ENCODE measurements at regions of chr7 and their contacts with region 1.

Region 1: GRCh38 chr7:120554960-120555571 is 282.1 kb downstream of the KCND2 start:
- DNase-seq: peak; percentile 71
- ATAC-seq: peak; percentile 95
- H3K4me3 ChIP-seq: no peak overlapping the region
- H3K27ac ChIP-seq: no peak overlapping the region
- H3K4me1 ChIP-seq: no peaks in the 10 kb centered on the region
- H3K27me3 ChIP-seq: no peaks in the 10 kb centered on the region
- CTCF ChIP-seq: peak; percentile 87

Region 2: GRCh38 chr7:118918556-118918955 is 1636.5 kb before region 1 on chr7:
- CTCF ChIA-PET with region 1: no interaction called
- POLR2A ChIA-PET with region 1: no interaction called
- intact Hi-C with region 1: loop called (anchors 2 kb)
- DNase-seq: peak; percentile 42
- ATAC-seq: peak; percentile 48; the same call in 1 of the 2 replicates
- H3K4me3 ChIP-seq: no peak overlapping the region
- H3K27ac ChIP-seq: no peak overlapping the region
- H3K4me1 ChIP-seq: no peaks in the 10 kb centered on the region
- H3K27me3 ChIP-seq: no peaks in the 10 kb centered on the region
- CTCF ChIP-seq: peak; percentile 65

Region 3: DNA sequence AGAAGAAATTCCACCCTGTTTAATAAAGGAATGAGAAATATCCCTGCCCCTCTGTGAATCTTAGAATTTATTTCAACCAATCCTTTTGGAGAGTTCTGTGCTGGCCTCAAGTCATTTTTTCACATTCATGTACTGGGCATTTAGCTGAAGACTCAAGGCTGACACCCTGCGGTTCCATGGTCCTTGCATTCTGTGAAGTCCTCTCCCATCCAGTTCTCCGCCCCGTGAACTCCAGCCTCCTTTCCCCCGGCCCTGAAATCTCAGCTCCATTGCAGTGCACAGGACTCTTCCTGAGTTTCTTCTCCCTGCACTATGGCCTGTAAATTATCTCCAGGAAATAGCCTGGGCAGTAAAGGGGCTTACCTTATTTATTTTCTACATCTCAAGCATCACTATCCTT is 465.1 kb before region 1 on chr7:
- CTCF ChIA-PET with region 1: no interaction called
- POLR2A ChIA-PET with region 1: no interaction called
- intact Hi-C with region 1: loop called (anchors 1 kb)
- DNase-seq: peak; percentile 65
- ATAC-seq: peak; percentile 98
- H3K4me3 ChIP-seq: no peak overlapping the region
- H3K27ac ChIP-seq: no peak overlapping the region
- H3K4me1 ChIP-seq: no peaks in the 10 kb centered on the region
- H3K27me3 ChIP-seq: no peaks in the 10 kb centered on the region
- CTCF ChIP-seq: peak; percentile 59

Region 4: GRCh38 chr7:120337308-120337907 is 217.7 kb before region 1 on chr7:
- CTCF ChIA-PET with region 1: no interaction called
- POLR2A ChIA-PET with region 1: no interaction called
- intact Hi-C with region 1: loop called (anchors 5 kb)
- DNase-seq: peak; percentile 25
- ATAC-seq: peak; percentile 89
- H3K4me3 ChIP-seq: no peak overlapping the region
- H3K27ac ChIP-seq: no peak overlapping the region
- H3K4me1 ChIP-seq: no peaks in the 10 kb centered on the region
- H3K27me3 ChIP-seq: no peaks in the 10 kb centered on the region
- CTCF ChIP-seq: peak; percentile 72

Region 5: GRCh38 chr7:120588416-120588815 is 33.4 kb after region 1 on chr7:
- CTCF ChIA-PET with region 1: no interaction called
- POLR2A ChIA-PET with region 1: no interaction called
- intact Hi-C with region 1: no loop called
- DNase-seq: no peak
- ATAC-seq: no peak
- H3K4me3 ChIP-seq: no peak overlapping the region
- H3K27ac ChIP-seq: no peak overlapping the region
- H3K4me1 ChIP-seq: no peaks in the 10 kb centered on the region
- H3K27me3 ChIP-seq: no peaks in the 10 kb centered on the region
- CTCF ChIP-seq: no peak

Region 6: DNA sequence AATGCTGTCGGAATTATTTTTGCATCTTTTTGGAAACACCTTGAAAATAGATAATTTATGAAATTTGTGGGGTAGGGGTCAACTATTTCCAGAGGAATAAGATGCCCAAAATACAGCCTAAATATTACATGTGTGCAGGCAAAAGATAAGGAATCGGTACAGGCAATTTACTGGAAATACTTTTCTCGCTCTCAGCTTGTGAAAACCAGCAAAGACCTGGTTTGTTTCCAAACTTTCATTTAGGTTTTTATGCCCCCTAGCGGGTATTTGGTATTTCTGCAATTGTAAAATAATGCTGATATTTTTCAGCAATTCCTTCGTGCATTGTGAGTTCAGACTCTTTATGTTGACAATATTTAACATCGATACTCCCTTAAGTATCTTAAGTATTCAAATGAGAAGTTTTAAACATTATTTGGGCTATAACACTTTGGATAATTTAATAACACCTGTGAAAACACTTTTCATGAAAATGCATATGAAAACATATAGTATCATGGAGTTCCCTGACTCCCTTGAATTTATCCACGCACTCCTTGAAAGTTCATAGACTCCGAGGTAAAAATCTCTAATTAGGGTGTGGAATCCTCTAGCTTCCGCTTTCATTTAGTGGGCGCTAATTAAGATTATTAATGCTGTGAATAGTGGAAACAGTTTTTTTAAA is 170.4 kb after region 1 on chr7:
- CTCF ChIA-PET with region 1: no interaction called
- POLR2A ChIA-PET with region 1: no interaction called
- intact Hi-C with region 1: loop called (anchors 1 kb)
- DNase-seq: peak; percentile 64
- ATAC-seq: no peak
- H3K4me3 ChIP-seq: peak overlapping the region; percentile 6; the same call in 1 of the 2 replicates
- H3K27ac ChIP-seq: no peak overlapping the region
- H3K4me1 ChIP-seq: no peaks in the 10 kb centered on the region
- H3K27me3 ChIP-seq: no peaks in the 10 kb centered on the region
- CTCF ChIP-seq: peak; percentile 79

Measured in PC-3 (cell line).